Esophagus muscularis mucosa (tissue), 4 donors: ENCODE measurements at regions of chr7 and their contacts with region 1.

Region 1: DNA sequence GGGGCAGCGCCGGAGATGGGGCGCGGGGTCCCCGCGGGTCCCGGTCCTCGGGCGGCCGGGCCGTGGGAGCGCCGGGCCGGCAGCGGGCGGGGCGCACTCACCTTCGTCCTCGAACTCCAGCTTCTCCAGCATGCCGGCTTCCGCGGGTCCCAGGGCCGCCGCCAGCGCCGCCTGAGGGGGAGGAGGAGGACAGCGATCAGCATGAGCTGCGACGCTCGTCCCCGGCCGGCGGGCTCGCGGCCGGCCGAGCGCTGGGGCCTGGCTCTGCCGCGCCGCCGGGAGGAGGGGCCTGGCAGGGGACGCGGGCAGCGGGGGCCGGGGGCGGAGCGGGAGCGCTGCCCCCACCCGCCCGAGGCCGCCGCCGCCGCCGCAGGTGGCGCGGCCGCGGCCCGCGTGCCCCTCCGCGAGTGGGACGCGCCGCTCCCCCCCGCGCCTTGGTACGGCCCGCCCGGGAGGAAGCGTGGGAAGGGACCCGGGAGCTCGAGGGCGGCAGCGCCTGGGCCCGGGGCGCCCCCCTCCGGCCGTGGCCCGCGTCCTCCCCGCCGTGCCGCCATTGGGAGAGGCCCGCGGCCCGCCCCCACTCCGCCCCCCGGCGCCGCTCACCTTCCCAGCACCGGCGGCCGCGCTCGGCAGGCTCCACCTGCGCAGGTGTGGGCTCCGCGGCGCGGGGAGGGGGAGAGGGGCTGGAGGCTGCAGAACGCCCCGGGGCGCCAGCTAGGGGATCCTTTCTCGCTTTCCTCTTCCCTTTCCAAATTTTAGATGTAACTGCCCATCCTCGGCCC is 112.5 kb upstream of the RHEB start:
- DNase-seq: no peak
- H3K4me3 ChIP-seq: peak overlapping the region; percentile 72 to 92 (median 82)
- H3K27ac ChIP-seq: peak overlapping the region; percentile 93 to 97 (median 96)
- H3K4me1 ChIP-seq: peaks cover 24 to 66% (median 52%) of the 10 kb centered on the region in 4 donors
- H3K27me3 ChIP-seq: no peaks in the 10 kb centered on the region
- CTCF ChIP-seq: peak; percentile 43 to 62 (median 53)
- EP300 ChIP-seq: no peak
- POLR2A ChIP-seq: no peak

Region 2: DNA sequence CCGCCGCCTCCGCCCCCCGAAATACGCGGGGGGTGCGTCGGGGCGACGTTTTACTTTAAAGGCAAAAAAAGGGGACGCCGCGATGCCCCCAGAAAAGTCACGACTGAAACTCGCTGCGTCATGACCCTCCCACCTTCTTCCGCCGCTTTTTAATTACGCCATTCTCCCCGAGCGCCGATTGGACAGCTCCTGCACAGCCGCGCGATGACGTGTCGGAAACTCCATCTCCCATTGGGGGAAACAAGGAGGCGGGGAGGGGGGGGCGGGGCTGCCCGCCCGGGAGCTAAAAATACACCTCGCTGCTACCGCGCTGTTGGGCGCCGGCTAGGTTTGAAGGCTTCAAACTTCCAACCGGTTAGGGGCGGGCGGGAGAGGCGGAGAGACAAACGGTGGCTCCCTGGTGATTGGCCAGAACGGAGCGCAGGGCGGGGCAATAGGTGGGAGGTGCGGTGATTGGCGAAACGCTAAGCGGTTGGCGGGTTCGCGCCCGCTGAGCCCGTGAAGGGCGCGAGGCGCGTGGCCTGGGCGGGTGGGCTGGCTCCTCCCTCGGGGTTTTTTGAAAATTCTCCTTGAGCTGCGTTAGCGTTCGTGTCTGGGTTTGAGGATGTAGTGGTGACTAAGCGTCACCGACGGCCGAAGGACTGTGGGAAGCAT is 112.3 kb before region 1 on chr7 and contains the start of gene RHEB:
- intact Hi-C with region 1: loop called (anchors 10 kb)
- DNase-seq: peak; percentile 100
- H3K4me3 ChIP-seq: peak within 1 kb of the TSS; percentile 71 to 99 (median 86)
- H3K27ac ChIP-seq: peak within 1 kb of the TSS; percentile 97 to 100 (median 100)
- H3K4me1 ChIP-seq: peaks cover 32 to 44% (median 42%) of the 10 kb centered on the region in 4 donors
- H3K27me3 ChIP-seq: no peaks in the 10 kb centered on the region
- CTCF ChIP-seq: no peak
- EP300 ChIP-seq: peak; percentile 33
- POLR2A ChIP-seq: no peak
- total RNA-seq, gene RHEB: 98.5 to 187 (median 163) TPM

Region 3: GRCh38 chr7:151694828-151695580 is 62.8 kb after region 1 on chr7:
- intact Hi-C with region 1: loop called (anchors 5 kb)
- DNase-seq: no peak
- H3K4me3 ChIP-seq: no peak overlapping the region
- H3K27ac ChIP-seq: peak overlapping the region in 2 of 4 donors; percentile 39 to 40
- H3K4me1 ChIP-seq: peaks cover 45 to 61% (median 48%) of the 10 kb centered on the region in 4 donors
- H3K27me3 ChIP-seq: no peaks in the 10 kb centered on the region
- CTCF ChIP-seq: no peak
- EP300 ChIP-seq: no peak
- POLR2A ChIP-seq: no peak